ENCODE measurements at regions of chr1 and their contacts with region 1.

Region 1: DNA sequence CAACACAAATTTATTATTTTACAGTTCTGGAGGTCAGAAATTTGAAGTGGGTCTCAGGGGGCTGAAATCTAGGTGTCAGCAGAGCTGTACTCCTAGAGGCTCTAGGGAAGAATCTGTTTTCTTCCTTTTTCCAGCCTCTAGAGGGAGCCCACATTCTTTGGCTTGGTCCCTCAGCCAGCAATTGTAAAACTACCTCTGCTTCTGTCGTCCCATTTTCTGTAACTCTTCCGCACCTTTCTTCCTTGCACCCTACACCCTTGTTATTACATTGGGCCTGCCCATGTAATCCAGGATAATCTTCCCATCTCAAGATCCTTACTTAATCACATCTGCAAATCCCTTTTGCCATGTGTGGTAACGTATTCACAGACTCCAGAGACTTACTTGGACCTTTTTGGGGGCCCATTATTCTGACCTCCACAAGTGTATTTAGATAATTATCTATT is 24.8 kb upstream of the THEM4 start:
- DNase-seq: peak; percentile 52 to 75 (median 69)
- H3K4me3 ChIP-seq: no peak overlapping the region
- H3K4me3 Mint-ChIP-seq: peak overlapping the region in 1 of 8 donors; percentile 4
- H3K27ac ChIP-seq: no peak overlapping the region
- H3K27ac Mint-ChIP-seq: peak overlapping the region in 5 of 7 donors; percentile 31 to 91 (median 65)
- H3K4me1 ChIP-seq: no peaks in the 10 kb centered on the region
- H3K4me1 Mint-ChIP-seq: peaks cover 4 to 6% (median 4%) of the 10 kb centered on the region in 4 donors
- H3K27me3 ChIP-seq: no peaks in the 10 kb centered on the region
- H3K27me3 Mint-ChIP-seq: peaks cover 0 to 4% of the 10 kb centered on the region in 2 donors

Region 2: GRCh38 chr1:151867785-151868411 is 66.2 kb before region 1 on chr1:
- CTCF ChIA-PET with region 1: no interaction called
- POLR2A ChIA-PET with region 1: no interaction called
- intact Hi-C with region 1: no loop called
- DNase-seq: no peak
- H3K4me3 ChIP-seq: no peak overlapping the region
- H3K4me3 Mint-ChIP-seq: no peak overlapping the region
- H3K27ac ChIP-seq: no peak overlapping the region
- H3K27ac Mint-ChIP-seq: no peak overlapping the region
- H3K4me1 ChIP-seq: no peaks in the 10 kb centered on the region
- H3K4me1 Mint-ChIP-seq: peaks cover 0 to 8% (median 1%) of the 10 kb centered on the region in 4 donors
- H3K27me3 ChIP-seq: no peaks in the 10 kb centered on the region
- H3K27me3 Mint-ChIP-seq: peaks cover 0 to 2% of the 10 kb centered on the region in 2 donors

Region 3: DNA sequence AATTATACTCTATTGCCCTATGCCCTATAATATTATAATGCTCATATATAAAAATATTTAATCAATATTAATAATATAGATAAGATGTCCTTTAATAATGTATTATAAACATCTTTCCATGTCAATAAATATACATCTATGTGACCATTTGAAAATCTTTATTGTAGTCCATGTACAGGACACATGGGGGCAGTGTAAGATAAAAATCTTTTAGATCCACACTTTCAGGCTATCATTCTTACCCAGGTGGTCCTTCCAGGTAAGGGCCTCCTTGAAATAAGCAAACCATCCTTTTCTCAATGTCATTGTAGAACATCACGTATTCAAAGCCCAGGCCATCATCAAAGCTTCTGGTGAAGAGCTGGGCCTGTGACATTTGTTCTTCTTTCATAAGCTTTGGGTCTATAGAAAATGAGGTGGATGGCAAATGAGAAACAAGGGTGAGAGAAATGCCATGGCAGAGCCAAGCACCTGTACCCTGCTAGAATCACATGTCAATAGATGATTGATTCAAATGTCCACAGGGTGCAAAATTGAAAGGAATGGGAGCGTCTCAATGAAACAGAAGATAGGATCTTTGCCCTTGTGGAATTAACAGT is 45.0 kb before region 1 on chr1:
- CTCF ChIA-PET with region 1: interaction called, 25 read pairs
- POLR2A ChIA-PET with region 1: interaction called, 3 read pairs
- intact Hi-C with region 1: loop called (anchors 1 kb)
- DNase-seq: peak in 4 of 5 donors; percentile 27 to 45 (median 34)
- H3K4me3 ChIP-seq: no peak overlapping the region
- H3K4me3 Mint-ChIP-seq: no peak overlapping the region
- H3K27ac ChIP-seq: no peak overlapping the region
- H3K27ac Mint-ChIP-seq: peak overlapping the region in 6 of 7 donors; percentile 18 to 84 (median 64)
- H3K4me1 ChIP-seq: peaks cover 21% of the 10 kb centered on the region
- H3K4me1 Mint-ChIP-seq: peaks cover 27 to 38% (median 33%) of the 10 kb centered on the region in 4 donors
- H3K27me3 ChIP-seq: no peaks in the 10 kb centered on the region
- H3K27me3 Mint-ChIP-seq: no peaks in the 10 kb centered on the region

Region 4: DNA sequence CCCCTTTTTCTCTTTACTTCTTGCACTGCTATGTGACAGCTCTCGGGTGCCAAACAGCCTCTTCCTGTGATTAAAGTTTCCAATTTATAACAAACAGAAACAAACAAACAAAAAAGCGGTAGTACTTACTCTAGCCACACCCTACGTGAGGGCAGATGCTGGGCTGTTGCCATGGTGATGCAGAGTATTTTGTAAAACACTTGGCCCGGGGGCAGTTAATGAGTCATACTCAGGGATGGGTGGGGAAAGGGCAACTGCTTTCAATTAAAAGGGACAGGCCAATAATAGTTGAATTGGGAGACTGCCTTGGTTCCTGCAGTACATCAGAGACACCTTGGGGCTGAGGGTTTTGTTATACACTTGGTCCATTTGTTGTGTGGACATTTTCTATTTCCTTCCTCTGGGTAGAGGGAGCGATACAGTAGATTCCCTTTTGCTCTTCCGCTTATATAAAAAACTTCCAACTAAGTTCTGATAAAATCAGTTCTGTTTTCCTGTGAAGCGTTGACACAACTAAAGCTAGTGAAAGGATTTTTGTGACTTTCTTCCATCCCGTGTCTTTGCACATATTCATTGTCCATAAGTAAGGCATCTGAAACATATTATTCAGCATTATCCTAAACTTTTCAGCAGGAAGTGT is 11.8 kb after region 1 on chr1:
- CTCF ChIA-PET with region 1: interaction called, 14 read pairs
- POLR2A ChIA-PET with region 1: interaction called, 6 read pairs
- intact Hi-C with region 1: no loop called
- DNase-seq: peak; percentile 87 to 97 (median 93)
- H3K4me3 ChIP-seq: peak overlapping the region in 1 of 2 donors; percentile 25
- H3K4me3 Mint-ChIP-seq: peak overlapping the region; percentile 49 to 80 (median 67)
- H3K27ac ChIP-seq: peak overlapping the region; percentile 82
- H3K27ac Mint-ChIP-seq: peak overlapping the region; percentile 94 to 98 (median 96)
- H3K4me1 ChIP-seq: peaks cover 53% of the 10 kb centered on the region
- H3K4me1 Mint-ChIP-seq: peaks cover 44 to 48% (median 47%) of the 10 kb centered on the region in 4 donors
- H3K27me3 ChIP-seq: no peaks in the 10 kb centered on the region
- H3K27me3 Mint-ChIP-seq: no peaks in the 10 kb centered on the region

Measured in CD4-positive, alpha-beta memory T cell (primary cell).